Endothelial cell of umbilical vein (primary cell): ENCODE measurements at regions of chr13 and their contacts with region 1.

Region 1: DNA sequence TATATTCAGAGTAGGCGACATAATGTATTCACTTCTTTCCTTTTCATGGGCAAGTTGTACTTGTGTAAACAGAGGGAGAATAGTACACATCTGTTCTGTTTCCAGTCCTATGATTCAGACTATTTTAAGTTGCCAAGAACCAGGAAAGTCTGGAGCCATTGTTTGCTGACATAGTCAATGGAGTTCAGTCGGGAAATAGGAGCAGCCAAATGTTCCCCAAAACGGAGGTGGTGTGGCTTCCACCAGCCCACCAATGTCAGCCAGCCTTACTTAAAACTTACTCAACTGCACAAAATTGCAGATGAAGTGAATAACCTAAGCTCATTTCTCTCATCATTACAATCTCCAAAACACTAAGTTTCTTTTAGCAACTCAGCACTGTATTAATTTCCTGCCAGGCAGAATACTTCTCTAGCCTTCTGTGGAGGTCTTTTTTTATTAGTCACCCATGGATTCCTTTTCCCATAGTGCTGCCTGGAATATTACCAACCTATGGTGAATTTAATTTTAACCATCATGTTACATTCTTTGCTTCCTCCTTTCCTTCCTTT is 22.3 kb upstream of the CSNK1A1L start:
- DNase-seq: peak; percentile 97
- H3K4me3 ChIP-seq: peak overlapping the region in 2 of 3 experiments; percentile 17 to 55
- H3K27ac ChIP-seq: peak overlapping the region; percentile 100
- H3K4me1 ChIP-seq: peaks cover 44% of the 10 kb centered on the region
- H3K27me3 ChIP-seq: no peaks in the 10 kb centered on the region
- CTCF ChIP-seq: no peak
- POLR2A ChIP-seq: no peak

Region 2: DNA sequence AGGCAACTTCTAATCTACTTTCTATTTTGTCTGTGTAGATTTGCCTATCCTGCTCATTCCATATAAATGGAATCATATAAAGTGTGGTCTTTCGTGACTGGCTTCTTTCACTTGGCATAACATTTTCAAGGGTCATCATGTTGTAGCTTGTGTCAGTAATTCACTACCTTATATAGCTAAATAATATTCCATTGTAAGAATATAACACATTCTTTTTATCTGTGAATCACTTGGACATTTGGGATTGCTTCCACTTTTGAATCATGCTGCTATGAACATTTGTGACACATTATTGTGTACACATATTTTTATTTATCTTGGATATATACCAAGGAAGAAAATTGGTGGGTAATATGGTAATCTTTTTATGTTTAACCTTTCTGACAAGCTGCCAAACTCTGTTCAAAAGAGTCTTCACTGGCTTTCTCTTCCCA is 66.7 kb after region 1 on chr13:
- CTCF ChIA-PET with region 1: interaction called, 3 read pairs
- POLR2A ChIA-PET with region 1: no interaction called
- dilution Hi-C with region 1: no loop called
- intact Hi-C with region 1: loop called (anchors 2 kb)
- DNase-seq: peak; percentile 71
- H3K4me3 ChIP-seq: no peak overlapping the region
- H3K27ac ChIP-seq: no peak overlapping the region
- H3K4me1 ChIP-seq: peaks cover 12% of the 10 kb centered on the region
- H3K27me3 ChIP-seq: no peaks in the 10 kb centered on the region
- CTCF ChIP-seq: no peak
- POLR2A ChIP-seq: no peak

Region 3: GRCh38 chr13:37360556-37360955 is 232.8 kb after region 1 on chr13:
- CTCF ChIA-PET with region 1: no interaction called
- POLR2A ChIA-PET with region 1: no interaction called
- dilution Hi-C with region 1: no loop called
- intact Hi-C with region 1: loop called (anchors 2 kb)
- DNase-seq: peak; percentile 66
- H3K4me3 ChIP-seq: peak overlapping the region in 1 of 3 experiments; percentile 53
- H3K27ac ChIP-seq: peak overlapping the region; percentile 58
- H3K4me1 ChIP-seq: peaks cover 18% of the 10 kb centered on the region
- H3K27me3 ChIP-seq: no peaks in the 10 kb centered on the region
- CTCF ChIP-seq: no peak
- POLR2A ChIP-seq: no peak

Region 4: DNA sequence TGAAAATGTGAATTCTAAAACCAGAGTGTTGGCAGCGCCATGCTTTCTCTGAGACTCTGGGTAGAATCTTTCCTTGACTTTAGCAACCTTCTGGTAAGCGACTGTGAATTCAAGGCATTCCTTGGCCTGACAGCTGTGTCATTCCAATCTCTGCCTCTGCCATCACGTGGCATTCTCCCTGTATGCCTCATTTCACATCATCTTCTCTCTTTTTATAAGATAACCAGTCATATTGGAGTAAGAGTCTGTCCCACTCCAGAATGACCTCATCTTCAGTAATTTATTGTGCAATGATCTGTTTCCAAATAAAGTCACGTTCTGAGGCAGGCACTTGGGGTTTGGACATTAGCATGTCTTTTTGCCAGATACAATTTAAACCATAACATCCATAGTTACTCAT is 574.2 kb after region 1 on chr13:
- CTCF ChIA-PET with region 1: no interaction called
- POLR2A ChIA-PET with region 1: no interaction called
- dilution Hi-C with region 1: no loop called
- intact Hi-C with region 1: loop called (anchors 5 kb)
- DNase-seq: peak; percentile 51
- H3K4me3 ChIP-seq: no peak overlapping the region
- H3K27ac ChIP-seq: peak overlapping the region; percentile 95
- H3K4me1 ChIP-seq: peaks cover 24% of the 10 kb centered on the region
- H3K27me3 ChIP-seq: no peaks in the 10 kb centered on the region
- CTCF ChIP-seq: no peak
- POLR2A ChIP-seq: no peak